ENCODE measurements at regions of chr4 and their contacts with region 1.

Region 1: GRCh38 chr4:128517739-128518510 is 230.3 kb upstream of the PGRMC2 start:
- DNase-seq: peak; percentile 63
- ATAC-seq: peak; percentile 89

Region 2: GRCh38 chr4:127798446-127798845 is 719.5 kb before region 1 on chr4:
- intact Hi-C with region 1: no loop called
- DNase-seq: no peak
- ATAC-seq: no peak

Region 3: GRCh38 chr4:128468123-128468989 is 49.6 kb before region 1 on chr4:
- intact Hi-C with region 1: loop called (anchors 5 kb)
- DNase-seq: no peak
- ATAC-seq: peak; percentile 88

Region 4: GRCh38 chr4:129578336-129578735 is 1060.4 kb after region 1 on chr4:
- intact Hi-C with region 1: no loop called
- DNase-seq: no peak
- ATAC-seq: no peak

Measured in left ventricle myocardium superior (tissue), 1 donor.